Activated naive CD4-positive, alpha-beta T cell treated with anti-CD3 and anti-CD28 coated beads for 36 hours (primary cell): ENCODE measurements at regions of chr4 and their contacts with region 1.

Region 1: GRCh38 chr4:169010125-169011023 is at the start of gene CBR4:
- DNase-seq: peak; percentile 97
- H3K4me3 Mint-ChIP-seq: peak within 1 kb of the TSS; percentile 75
- H3K27ac Mint-ChIP-seq: peak within 1 kb of the TSS; percentile 86
- H3K4me1 Mint-ChIP-seq: peaks cover 15% of the 10 kb centered on the region
- H3K27me3 Mint-ChIP-seq: no peaks in the 10 kb centered on the region
- total RNA-seq, gene CBR4: 22.9 to 24.3 TPM

Region 2: GRCh38 chr4:168057412-168057811 is 953.0 kb before region 1 on chr4:
- CTCF ChIA-PET with region 1: no interaction called
- intact Hi-C with region 1: no loop called
- DNase-seq: no peak
- H3K4me3 Mint-ChIP-seq: no peak overlapping the region
- H3K27ac Mint-ChIP-seq: no peak overlapping the region
- H3K4me1 Mint-ChIP-seq: no peaks in the 10 kb centered on the region
- H3K27me3 Mint-ChIP-seq: no peaks in the 10 kb centered on the region

Region 3: DNA sequence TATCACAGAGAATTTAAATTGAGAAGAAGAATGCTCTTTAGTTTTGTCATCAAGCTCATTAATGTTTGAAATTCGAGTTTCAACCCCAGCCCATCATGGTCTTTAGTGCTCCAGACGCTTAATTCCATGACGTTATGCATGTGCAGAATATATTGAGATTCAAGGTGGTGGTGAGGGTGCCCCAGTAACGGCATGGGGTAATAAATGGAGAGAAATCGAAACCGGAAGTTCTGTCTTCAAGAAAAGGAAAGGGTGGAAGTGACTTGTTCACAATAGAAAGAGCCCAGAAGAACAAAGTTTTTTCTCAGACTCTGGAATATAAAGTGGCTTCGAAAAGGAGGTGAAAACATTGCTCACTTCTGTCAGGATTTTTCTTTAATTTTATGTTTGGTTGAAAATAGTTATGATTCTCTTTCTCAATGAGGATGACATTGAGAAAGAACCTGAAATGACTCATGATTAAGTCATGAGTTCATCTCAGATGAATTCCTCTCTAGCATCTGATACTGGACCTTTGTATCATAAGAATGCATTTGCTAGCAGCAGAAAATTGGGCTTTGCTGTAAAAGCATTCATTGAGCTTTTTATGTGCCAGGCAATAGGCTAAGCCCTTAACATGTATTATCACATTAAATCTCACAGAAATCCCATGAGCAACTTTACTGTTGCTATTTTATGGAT is 529.3 kb before region 1 on chr4:
- CTCF ChIA-PET with region 1: no interaction called
- intact Hi-C with region 1: loop called (anchors 1 kb)
- DNase-seq: peak; percentile 51
- H3K4me3 Mint-ChIP-seq: peak overlapping the region; percentile 96
- H3K27ac Mint-ChIP-seq: peak overlapping the region; percentile 96
- H3K4me1 Mint-ChIP-seq: peaks cover 69% of the 10 kb centered on the region
- H3K27me3 Mint-ChIP-seq: no peaks in the 10 kb centered on the region

Region 4: DNA sequence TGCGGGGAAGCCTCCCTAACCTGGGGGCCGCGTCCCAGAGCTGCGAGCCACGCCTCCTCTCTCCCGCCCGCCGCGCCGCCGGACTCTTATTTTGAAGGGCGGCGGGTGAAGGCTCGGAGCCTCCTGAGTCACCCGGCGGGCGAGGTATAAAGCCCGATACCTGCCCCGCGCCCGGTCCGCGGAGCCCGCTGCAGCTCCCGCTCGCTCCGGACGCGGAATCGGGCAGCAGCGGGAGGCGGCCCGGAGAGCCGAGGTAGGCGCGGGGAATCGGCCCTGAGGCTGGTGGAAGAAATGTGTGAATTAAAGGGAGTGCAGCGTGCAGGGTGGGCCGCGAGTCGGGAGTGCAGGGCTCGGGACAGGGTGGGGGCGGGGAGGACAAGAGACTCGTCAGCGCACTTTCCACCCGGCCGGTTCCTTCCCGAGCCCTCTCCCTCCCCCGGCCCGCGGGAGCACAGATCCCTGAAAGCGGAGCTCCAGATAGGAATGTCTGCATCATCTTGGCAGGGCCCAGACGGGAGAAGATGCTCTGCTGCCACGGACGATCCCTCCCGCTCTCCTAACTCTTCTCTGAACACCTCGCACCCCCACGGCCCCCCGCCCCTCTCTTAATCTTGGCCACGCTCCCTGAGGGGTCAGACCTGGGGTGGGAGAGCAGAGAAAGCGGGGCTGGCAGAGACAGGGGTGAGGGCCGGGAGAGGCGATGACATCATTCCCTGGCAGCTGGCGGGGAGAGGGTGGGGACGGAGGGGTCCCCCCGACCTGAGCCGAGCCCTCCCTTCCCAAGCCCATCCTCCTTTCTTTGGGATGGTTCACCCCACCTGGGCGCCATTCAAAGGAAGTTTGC is 178.2 kb before region 1 on chr4:
- CTCF ChIA-PET with region 1: no interaction called
- intact Hi-C with region 1: loop called (anchors 2 kb)
- DNase-seq: peak; percentile 70
- H3K4me3 Mint-ChIP-seq: peak overlapping the region; percentile 74
- H3K27ac Mint-ChIP-seq: no peak overlapping the region
- H3K4me1 Mint-ChIP-seq: peaks cover 11% of the 10 kb centered on the region
- H3K27me3 Mint-ChIP-seq: peaks cover 57% of the 10 kb centered on the region

Region 5: GRCh38 chr4:169238445-169238844 is 228.1 kb after region 1 on chr4:
- CTCF ChIA-PET with region 1: no interaction called
- intact Hi-C with region 1: no loop called
- DNase-seq: no peak
- H3K4me3 Mint-ChIP-seq: no peak overlapping the region
- H3K27ac Mint-ChIP-seq: no peak overlapping the region
- H3K4me1 Mint-ChIP-seq: no peaks in the 10 kb centered on the region
- H3K27me3 Mint-ChIP-seq: peaks cover 14% of the 10 kb centered on the region

Region 6: GRCh38 chr4:169270810-169271691 is 260.7 kb after region 1 on chr4 and contains the start of gene SH3RF1:
- CTCF ChIA-PET with region 1: interaction called, 7 read pairs
- intact Hi-C with region 1: loop called (anchors 2 kb)
- DNase-seq: peak; percentile 49
- H3K4me3 Mint-ChIP-seq: peak within 1 kb of the TSS; percentile 77
- H3K27ac Mint-ChIP-seq: no peak within 1 kb of the TSS
- H3K4me1 Mint-ChIP-seq: peaks cover 3% of the 10 kb centered on the region
- H3K27me3 Mint-ChIP-seq: peaks cover 49% of the 10 kb centered on the region
- total RNA-seq, gene SH3RF1: 0.22 to 0.55 TPM

Region 7: GRCh38 chr4:169566021-169566818 is 555.8 kb after region 1 on chr4:
- CTCF ChIA-PET with region 1: no interaction called
- intact Hi-C with region 1: loop called (anchors 10 kb)
- DNase-seq: peak; percentile 47
- H3K4me3 Mint-ChIP-seq: no peak overlapping the region
- H3K27ac Mint-ChIP-seq: no peak overlapping the region
- H3K4me1 Mint-ChIP-seq: peaks cover 7% of the 10 kb centered on the region
- H3K27me3 Mint-ChIP-seq: no peaks in the 10 kb centered on the region

Region 8: GRCh38 chr4:169659716-169660670 is 649.6 kb after region 1 on chr4:
- CTCF ChIA-PET with region 1: no interaction called
- intact Hi-C with region 1: loop called (anchors 1 kb)
- DNase-seq: peak; percentile 87
- H3K4me3 Mint-ChIP-seq: peak overlapping the region; percentile 89
- H3K27ac Mint-ChIP-seq: peak overlapping the region; percentile 95
- H3K4me1 Mint-ChIP-seq: peaks cover 30% of the 10 kb centered on the region
- H3K27me3 Mint-ChIP-seq: no peaks in the 10 kb centered on the region